Endothelial cell of umbilical vein (primary cell): ENCODE measurements at regions of chr1 and their contacts with region 1.

Region 1: GRCh38 chr1:150268705-150269403 is at the start of gene APH1A:
- DNase-seq: peak; percentile 95
- H3K4me3 ChIP-seq: peak within 1 kb of the TSS; percentile 51 to 84 (median 77)
- H3K27ac ChIP-seq: peak within 1 kb of the TSS; percentile 89
- H3K4me1 ChIP-seq: peaks cover 40% of the 10 kb centered on the region
- H3K27me3 ChIP-seq: no peaks in the 10 kb centered on the region
- CTCF ChIP-seq: no peak
- POLR2A ChIP-seq: peak; percentile 26
- total RNA-seq, gene APH1A: 157 and 165 TPM in 2 replicates

Region 2: GRCh38 chr1:150235852-150236613 is 32.8 kb before region 1 on chr1 and contains the start of gene ANP32E:
- CTCF ChIA-PET with region 1: no interaction called
- POLR2A ChIA-PET with region 1: no interaction called
- dilution Hi-C with region 1: no loop called
- intact Hi-C with region 1: loop called (anchors 1 kb)
- DNase-seq: peak; percentile 99
- H3K4me3 ChIP-seq: peak within 1 kb of the TSS; percentile 72 to 95 (median 86)
- H3K27ac ChIP-seq: peak within 1 kb of the TSS; percentile 61
- H3K4me1 ChIP-seq: peaks cover 11% of the 10 kb centered on the region
- H3K27me3 ChIP-seq: no peaks in the 10 kb centered on the region
- CTCF ChIP-seq: no peak
- POLR2A ChIP-seq: peak; percentile 98
- total RNA-seq, gene ANP32E: 53.4 and 57.9 TPM in 2 replicates

Region 3: DNA sequence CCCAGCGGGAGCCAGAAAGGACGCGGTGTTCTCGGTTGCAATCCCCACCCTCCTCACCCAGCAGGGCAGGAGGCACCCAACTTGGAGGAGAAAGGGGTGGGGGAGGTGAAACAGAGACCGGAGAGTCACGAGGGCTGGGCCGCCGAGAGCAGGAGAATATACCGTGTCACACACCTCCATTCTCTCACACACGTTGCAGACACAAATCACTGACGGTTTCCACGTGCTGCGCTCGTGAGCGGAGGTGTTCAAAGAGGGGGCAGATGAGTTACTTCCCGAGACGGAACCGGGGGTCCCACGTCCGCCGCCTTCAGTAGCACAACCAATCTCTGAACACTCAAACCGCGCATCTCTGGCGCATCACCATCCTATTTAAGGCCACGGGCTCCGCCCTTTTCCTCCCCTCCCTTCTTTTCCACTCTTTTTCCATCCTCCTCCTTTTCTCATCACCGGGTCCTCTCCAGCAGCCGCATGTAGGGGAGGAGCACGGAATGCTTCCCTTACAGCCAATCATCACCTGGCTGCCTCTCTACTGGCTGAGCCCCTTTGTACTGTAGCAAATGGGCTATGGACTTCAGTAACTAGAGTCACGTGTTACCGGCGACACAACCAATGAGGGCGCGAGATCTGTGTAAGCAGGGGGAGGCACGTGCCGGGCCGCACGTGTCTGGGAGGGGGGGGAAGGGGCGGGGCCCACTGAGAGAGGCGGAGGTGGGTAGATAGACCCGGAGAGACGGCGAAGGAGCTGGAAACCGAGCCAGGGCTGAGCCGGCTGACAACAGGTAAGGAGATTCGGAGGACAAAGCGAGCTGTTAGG is 13.2 kb after region 1 on chr1 and contains the start of gene CIART:
- CTCF ChIA-PET with region 1: interaction called, 26 read pairs
- POLR2A ChIA-PET with region 1: interaction called, 4 read pairs
- dilution Hi-C with region 1: no loop called
- intact Hi-C with region 1: loop called (anchors 1 kb)
- DNase-seq: peak; percentile 91
- H3K4me3 ChIP-seq: peak within 1 kb of the TSS; percentile 20 to 40 (median 29)
- H3K27ac ChIP-seq: no peak within 1 kb of the TSS
- H3K4me1 ChIP-seq: peaks cover 10% of the 10 kb centered on the region
- H3K27me3 ChIP-seq: peaks cover 0 to 8% of the 10 kb centered on the region in 2 experiments
- CTCF ChIP-seq: no peak
- POLR2A ChIP-seq: peak; percentile 44
- total RNA-seq, gene CIART: 1.0 and 2.4 TPM in 2 replicates

Region 4: DNA sequence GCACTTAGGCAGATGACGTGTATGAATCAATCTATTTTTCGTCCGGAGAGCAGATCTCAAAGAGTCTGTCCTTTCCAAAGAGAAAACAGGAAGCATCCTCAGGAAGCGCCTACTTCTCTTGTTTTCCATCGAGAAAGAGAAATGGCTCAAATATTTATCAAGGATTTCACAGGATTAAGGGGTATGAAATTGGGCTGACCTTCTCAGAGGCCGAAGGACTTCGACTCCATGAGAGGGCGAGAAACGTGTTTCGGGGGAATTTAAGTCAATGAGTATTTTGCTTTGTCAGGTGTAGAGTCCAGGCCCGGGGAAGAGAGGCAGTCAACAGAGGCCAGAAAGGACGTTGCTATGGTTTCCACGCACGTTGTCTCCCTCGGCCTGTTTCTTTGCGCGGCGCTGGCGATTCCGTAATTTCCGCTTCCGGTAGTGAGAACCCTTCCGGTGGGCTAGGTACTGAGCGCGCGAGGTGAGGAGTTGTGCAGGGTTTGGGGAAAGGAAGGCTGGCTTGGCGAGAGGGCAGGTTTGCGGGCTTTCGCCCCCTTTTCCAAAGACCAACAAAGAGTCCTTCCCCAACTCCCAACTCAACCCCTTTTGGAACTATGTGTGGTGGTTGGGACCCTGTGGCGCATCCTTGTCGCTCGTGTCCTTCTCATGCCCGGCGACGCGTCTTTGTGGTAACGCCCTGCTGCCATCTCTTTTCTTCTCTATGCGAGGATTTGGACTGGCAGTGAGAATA is 24.7 kb after region 1 on chr1 and contains the start of gene MRPS21:
- CTCF ChIA-PET with region 1: interaction called, 3 read pairs
- POLR2A ChIA-PET with region 1: interaction called, 3 read pairs
- dilution Hi-C with region 1: no loop called
- intact Hi-C with region 1: loop called (anchors 1 kb)
- DNase-seq: peak; percentile 94
- H3K4me3 ChIP-seq: peak within 1 kb of the TSS; percentile 25 to 90 (median 54)
- H3K27ac ChIP-seq: peak within 1 kb of the TSS; percentile 81
- H3K4me1 ChIP-seq: peaks cover 13% of the 10 kb centered on the region
- H3K27me3 ChIP-seq: no peaks in the 10 kb centered on the region
- CTCF ChIP-seq: no peak
- POLR2A ChIP-seq: peak; percentile 94
- total RNA-seq, gene MRPS21: 73.0 and 76.7 TPM in 2 replicates

Region 5: DNA sequence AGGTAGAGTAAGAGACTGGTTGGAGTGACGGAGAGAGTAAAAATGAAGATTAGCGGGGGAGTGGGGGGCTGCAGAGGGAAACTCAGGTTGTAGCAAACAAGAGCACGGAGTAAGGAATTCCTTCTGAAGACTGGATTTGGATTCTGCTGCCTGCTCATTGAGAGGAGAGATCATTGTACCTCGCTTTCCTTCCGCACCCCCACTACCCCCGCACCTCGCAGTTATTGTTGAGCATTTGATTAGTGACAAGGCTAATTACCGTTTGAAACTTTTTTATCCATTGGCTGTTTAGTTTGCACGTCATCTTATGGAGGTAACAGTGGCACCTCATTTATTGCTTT is 52.9 kb after region 1 on chr1:
- CTCF ChIA-PET with region 1: no interaction called
- POLR2A ChIA-PET with region 1: interaction called, 10 read pairs
- dilution Hi-C with region 1: no loop called
- intact Hi-C with region 1: loop called (anchors 1 kb)
- DNase-seq: no peak
- H3K4me3 ChIP-seq: peak overlapping the region; percentile 68 to 88 (median 68)
- H3K27ac ChIP-seq: peak overlapping the region; percentile 62
- H3K4me1 ChIP-seq: peaks cover 7% of the 10 kb centered on the region
- H3K27me3 ChIP-seq: no peaks in the 10 kb centered on the region
- CTCF ChIP-seq: no peak
- POLR2A ChIP-seq: no peak

Region 6: DNA sequence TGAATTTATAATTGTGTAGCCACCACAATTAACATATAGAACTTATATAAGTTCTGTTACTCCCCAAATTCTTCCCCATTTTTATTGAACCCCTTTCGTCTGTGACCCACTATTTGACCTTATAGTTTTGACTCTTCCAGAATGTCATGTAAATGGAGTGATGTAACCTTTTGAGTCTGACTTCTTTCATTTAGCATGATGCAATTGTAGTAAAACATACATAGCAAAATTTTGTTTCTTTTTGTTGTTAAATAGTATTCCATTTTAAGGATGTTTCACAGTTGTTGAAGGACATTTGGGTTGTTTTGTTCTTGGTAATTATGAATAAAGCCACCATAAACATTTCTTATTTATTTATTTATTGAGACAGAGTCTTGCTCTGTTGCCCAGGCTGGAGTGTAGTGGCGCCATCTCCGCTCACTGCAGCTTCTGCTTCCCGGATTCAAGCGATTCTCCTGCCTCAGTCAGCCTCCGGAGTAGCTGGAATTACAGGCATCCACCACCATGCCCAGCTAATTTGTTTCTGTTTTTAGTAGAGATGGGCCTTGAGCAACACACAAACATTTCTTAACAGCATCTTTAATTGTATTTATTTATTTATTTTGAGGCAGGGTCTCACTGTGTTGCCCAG is 128.7 kb after region 1 on chr1:
- CTCF ChIA-PET with region 1: no interaction called
- POLR2A ChIA-PET with region 1: no interaction called
- dilution Hi-C with region 1: no loop called
- intact Hi-C with region 1: no loop called
- DNase-seq: no peak
- H3K4me3 ChIP-seq: no peak overlapping the region
- H3K27ac ChIP-seq: no peak overlapping the region
- H3K4me1 ChIP-seq: no peaks in the 10 kb centered on the region
- H3K27me3 ChIP-seq: no peaks in the 10 kb centered on the region
- CTCF ChIP-seq: no peak
- POLR2A ChIP-seq: no peak